Adrenal gland (tissue), 19 donors: ENCODE measurements at regions of chr19 and their contacts with region 1.

Region 1: DNA sequence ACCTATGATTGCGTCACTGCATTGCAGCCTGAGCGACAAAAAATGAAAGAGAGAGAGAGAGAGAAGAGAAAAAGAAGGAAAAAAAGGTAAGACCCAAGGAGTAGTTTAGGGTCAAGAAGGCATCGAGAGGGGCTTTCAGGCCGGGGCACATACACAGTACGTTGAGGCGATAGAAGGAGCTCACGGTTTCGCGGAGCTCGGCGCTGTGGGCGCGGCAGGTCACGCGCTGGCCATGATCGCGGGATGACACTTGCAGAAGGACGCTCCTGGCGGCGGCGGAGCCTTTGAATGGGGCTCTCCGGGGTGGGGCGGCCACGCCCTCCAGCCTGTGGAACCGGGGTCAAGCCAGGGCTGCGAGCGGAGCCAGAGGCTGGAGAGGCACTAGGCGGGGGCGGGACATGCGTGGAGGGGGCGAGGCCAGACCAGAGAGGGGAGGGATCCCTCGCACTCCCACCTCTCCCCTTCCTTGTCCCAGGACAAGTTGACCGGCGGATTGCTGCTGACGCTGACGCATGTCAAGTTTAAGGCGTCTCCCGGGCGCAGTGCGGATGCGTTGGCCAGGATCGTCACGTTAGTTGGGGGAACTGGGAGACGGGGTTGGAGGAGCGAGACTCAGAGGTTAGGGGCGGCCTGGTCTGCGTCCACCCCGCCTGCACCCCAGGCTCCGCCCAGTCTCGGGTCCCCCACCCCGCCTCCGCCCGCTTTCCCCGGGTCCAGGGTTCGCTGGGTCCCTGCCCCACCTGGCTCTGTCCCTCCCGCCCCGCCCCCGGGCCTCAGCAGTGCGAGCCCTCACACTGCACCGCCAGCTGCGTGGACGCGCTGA is 6.9 kb downstream of the NPHS1 start:
- DNase-seq: no peak
- H3K4me3 ChIP-seq: peak overlapping the region in 1 of 4 donors; percentile 41
- H3K27ac ChIP-seq: no peak overlapping the region
- H3K4me1 ChIP-seq: peaks cover 0 to 7% of the 10 kb centered on the region in 2 donors
- H3K27me3 ChIP-seq: peaks cover 61% of the 10 kb centered on the region
- CTCF ChIP-seq: no peak
- POLR2A ChIP-seq: no peak

Region 2: DNA sequence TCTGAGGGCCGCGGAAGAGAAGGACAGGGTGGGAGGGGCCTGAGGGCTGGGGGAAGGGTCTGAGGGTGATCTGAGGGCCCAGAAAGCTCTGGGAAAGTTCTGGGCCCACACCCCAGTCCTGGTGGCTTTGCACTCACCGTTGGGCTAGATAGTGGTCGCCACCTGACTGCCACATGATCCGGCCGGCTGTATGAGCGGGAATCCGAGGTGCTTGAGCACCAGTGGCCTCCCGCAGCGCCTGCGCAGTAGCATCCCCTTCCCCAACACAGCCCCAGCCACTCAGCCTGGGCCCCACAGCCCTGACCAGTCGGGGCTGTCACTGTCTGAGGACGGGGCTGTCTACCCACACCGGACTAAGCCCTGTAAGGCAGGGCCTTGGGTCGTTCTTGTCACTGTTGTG is 47.8 kb before region 1 on chr19:
- intact Hi-C with region 1: loop called in 1 of 2 experiments (anchors 5 kb)
- DNase-seq: no peak
- H3K4me3 ChIP-seq: no peak overlapping the region
- H3K27ac ChIP-seq: no peak overlapping the region
- H3K4me1 ChIP-seq: no peaks in the 10 kb centered on the region
- H3K27me3 ChIP-seq: peaks cover 8% of the 10 kb centered on the region
- CTCF ChIP-seq: no peak
- POLR2A ChIP-seq: no peak

Region 3: DNA sequence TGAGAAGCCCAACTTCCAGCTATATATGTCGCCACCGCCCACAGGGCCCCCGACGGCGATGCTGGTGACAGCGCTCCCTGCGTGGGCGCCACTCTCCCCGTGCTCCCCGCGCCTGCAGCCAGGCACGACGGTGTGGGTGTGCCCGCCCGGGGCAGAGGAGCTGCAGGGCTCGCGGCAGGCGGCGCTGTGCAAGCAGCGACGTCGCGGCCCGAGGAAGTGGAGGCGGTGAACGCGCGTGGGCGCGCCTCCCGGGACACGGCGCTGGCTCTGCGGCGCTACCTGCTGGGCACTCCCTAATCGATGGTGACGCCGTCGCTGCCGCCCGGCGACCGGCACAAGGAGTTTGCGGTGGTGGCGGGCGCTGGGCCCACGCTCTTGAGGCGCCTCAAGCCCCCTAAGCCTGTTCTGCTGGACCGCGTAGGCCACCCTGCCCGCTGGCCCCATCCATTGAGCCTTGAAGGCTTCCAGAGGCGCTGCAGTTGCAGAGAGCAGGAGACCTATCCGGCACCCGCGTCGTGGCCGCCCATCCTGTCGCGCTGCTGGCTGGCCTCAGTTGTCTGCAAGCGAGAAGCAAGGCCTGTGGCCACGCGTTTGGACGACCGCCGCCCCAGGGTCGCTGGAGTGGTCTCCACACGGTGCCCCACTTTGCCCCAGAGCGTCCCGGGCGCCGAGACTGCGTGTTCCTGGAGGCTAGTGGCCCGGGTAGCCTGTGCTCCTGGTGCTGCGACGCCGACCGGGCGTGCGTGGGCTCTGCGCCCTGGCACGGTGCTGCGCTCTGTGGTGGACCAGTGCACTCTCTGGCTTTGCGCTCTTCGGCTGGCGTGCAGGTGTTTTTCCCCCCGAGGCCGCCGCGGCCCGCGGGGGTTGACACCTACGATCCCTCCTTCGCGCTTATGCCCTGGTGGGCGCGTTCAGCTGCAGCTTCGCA is 113.9 kb after region 1 on chr19:
- intact Hi-C with region 1: no loop called
- DNase-seq: peak in 1 of 7 donors; percentile 15
- H3K4me3 ChIP-seq: no peak overlapping the region
- H3K27ac ChIP-seq: no peak overlapping the region
- H3K4me1 ChIP-seq: peaks cover 0 to 8% of the 10 kb centered on the region in 2 donors
- H3K27me3 ChIP-seq: peaks cover 25% of the 10 kb centered on the region
- CTCF ChIP-seq: peak in 2 of 6 experiments; percentile 8 to 24
- POLR2A ChIP-seq: no peak

Region 4: DNA sequence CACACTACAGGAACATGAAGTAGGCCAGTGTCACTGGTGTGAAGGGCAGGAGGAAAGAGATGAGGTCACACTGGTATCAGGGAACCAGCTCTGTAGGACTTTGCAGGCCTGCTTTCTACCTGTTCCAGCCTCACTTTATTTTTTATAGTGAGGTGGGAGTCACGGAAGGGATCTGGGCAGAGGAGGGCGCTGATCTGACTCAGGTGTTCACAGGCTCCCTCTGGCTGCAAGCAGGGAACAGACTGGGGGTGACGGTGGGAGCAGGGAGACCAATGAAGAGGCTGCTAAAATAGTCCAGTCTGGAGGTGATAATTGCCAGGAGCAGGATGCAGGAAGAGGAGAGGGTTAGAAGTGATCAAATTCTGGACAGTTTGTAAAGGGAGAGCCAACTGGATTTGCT is 205.8 kb after region 1 on chr19:
- intact Hi-C with region 1: no loop called
- DNase-seq: peak in 1 of 7 donors; percentile 56
- H3K4me3 ChIP-seq: no peak overlapping the region
- H3K27ac ChIP-seq: no peak overlapping the region
- H3K4me1 ChIP-seq: peaks cover 0 to 9% of the 10 kb centered on the region in 2 donors
- H3K27me3 ChIP-seq: no peaks in the 10 kb centered on the region
- CTCF ChIP-seq: no peak
- POLR2A ChIP-seq: no peak